HEK293 (cell line): ENCODE measurements at regions of chr17 and their contacts with region 1.

Region 1: GRCh38 chr17:3738562-3739295 is 15.0 kb downstream of the HASPIN start:
- H3K4me3 ChIP-seq: no peak overlapping the region
- H3K27ac ChIP-seq: no peak overlapping the region
- H3K4me1 ChIP-seq: no peaks in the 10 kb centered on the region
- CTCF ChIP-seq: no peak

Region 2: DNA sequence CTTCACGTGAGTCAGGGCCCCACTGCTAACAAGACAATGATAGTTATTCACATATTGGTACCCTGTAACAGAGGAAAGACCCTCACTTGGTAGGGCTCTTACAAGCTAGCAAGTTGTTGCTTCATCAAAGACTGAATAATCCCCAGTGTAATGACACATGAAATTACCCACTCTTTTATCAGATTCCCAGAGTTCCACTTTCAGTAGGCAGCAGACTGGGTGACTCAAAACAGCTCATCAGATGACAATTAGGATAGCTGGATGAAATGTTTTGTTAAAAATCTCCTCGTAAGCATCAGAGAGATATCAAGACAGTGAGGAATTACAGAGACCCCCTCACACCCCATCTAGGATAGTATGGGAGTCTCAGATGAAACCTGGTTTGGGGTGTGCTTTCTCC is 298.3 kb before region 1 on chr17:
- CTCF ChIA-PET with region 1: no interaction called
- POLR2A ChIA-PET with region 1: no interaction called
- H3K4me3 ChIP-seq: no peak overlapping the region
- H3K27ac ChIP-seq: no peak overlapping the region
- H3K4me1 ChIP-seq: no peaks in the 10 kb centered on the region
- CTCF ChIP-seq: no peak

Region 3: DNA sequence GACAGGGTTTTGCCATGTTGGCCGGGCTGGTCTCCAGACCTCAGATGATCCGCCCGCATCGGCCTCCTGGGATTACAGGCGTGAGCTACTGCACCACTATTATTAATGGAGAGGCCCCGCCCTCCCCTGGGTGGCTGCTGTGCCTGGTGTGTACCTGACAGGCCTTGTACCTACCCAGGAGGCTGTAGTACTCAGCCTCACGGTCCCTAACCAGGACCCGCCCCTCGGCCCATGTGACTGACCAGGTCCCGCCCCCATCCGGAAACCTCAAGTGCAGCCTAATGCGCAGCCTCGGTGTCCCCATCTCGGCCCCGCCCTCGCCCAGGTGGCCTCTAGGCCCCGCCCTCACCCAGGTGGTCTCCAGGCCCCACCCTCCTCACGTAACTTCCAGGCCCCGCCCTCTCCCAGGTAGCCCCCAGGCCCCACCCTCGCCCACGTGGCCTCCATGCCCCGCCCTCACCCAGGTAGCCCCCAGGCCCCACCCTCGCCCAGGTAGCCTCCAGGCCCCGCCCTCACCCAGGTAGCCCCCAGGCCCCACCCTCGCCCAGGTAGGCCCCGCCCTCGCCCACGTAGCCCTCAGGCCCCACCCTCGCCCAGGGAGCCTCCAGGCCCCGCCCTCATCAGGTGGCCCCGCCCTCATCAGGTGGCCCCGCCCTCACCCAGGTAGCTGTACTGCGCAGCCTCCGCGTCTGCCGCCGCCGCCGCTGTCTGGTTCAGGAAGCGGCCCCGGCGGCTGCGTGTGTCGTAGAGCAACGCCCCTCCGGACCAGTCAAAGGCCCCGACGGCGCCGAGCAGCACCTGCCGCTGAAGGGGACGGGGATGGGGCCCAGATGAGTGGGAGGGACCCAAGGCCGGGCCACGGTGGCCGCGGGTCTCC is 16.0 kb after region 1 on chr17:
- CTCF ChIA-PET with region 1: interaction called, 81 read pairs
- POLR2A ChIA-PET with region 1: interaction called, 6 read pairs
- H3K4me3 ChIP-seq: peak overlapping the region; percentile 26
- H3K27ac ChIP-seq: peak overlapping the region; percentile 41; the same call in 1 of the 2 replicates
- H3K4me1 ChIP-seq: no peaks in the 10 kb centered on the region
- CTCF ChIP-seq: no peak

Region 4: DNA sequence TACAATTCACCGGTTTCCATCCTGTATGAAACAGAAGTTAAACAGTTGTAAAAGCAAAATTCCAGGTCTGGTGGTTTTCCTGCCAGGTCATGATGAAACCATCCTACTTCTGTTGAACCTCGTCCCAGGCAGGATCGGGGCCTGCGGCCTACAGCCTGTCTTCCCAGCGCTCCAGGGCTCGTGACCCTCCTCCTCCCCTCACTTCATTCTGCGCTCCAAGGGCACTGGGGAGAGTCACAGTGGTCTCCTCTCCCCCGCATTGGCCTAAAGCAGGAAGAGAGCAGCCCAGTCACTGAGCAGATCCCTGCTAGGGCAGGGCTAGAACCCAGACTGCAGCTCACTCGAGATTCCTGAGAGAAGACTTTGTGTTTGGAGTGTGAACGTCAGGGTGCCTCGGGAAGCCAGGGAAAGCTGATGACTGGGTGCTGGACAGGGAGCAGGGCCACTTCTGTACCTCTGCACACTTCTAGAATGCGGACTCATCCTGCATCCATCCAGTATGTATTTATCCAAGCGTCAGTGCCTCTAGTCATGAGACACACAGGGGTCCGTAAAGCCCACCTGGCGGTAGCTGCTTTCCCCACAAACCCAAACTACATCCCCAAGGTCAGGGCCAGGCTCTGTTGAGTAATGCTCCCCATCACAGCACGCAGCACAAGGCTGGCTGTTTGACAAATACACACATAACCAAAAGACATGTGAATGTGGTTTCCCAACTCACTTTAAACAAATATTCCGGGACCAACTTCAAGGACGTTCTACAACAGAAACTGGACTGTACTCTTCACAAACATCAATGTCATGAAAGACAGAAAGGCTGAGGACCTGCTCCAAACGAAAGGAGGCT is 64.0 kb after region 1 on chr17:
- CTCF ChIA-PET with region 1: interaction called, 14 read pairs
- POLR2A ChIA-PET with region 1: no interaction called
- H3K4me3 ChIP-seq: no peak overlapping the region
- H3K27ac ChIP-seq: no peak overlapping the region
- H3K4me1 ChIP-seq: no peaks in the 10 kb centered on the region
- CTCF ChIP-seq: no peak

Region 5: GRCh38 chr17:3827124-3827773 is 88.5 kb after region 1 on chr17:
- CTCF ChIA-PET with region 1: interaction called, 172 read pairs
- POLR2A ChIA-PET with region 1: no interaction called
- H3K4me3 ChIP-seq: no peak overlapping the region
- H3K27ac ChIP-seq: no peak overlapping the region
- H3K4me1 ChIP-seq: no peaks in the 10 kb centered on the region
- CTCF ChIP-seq: no peak

Region 6: GRCh38 chr17:3852561-3852960 is 113.8 kb after region 1 on chr17:
- CTCF ChIA-PET with region 1: interaction called, 120 read pairs
- POLR2A ChIA-PET with region 1: interaction called, 3 read pairs
- H3K4me3 ChIP-seq: no peak overlapping the region
- H3K27ac ChIP-seq: no peak overlapping the region
- H3K4me1 ChIP-seq: no peaks in the 10 kb centered on the region
- CTCF ChIP-seq: no peak

Region 7: GRCh38 chr17:4004517-4005295 is 266.0 kb after region 1 on chr17:
- CTCF ChIA-PET with region 1: interaction called, 23 read pairs
- POLR2A ChIA-PET with region 1: no interaction called
- H3K4me3 ChIP-seq: no peak overlapping the region
- H3K27ac ChIP-seq: no peak overlapping the region
- H3K4me1 ChIP-seq: no peaks in the 10 kb centered on the region
- CTCF ChIP-seq: peak; percentile 88